AG04449 (cell line): ENCODE measurements at regions of chr2 and their contacts with region 1.

Region 1: GRCh38 chr2:23824777-23825212 is 102.1 kb downstream of the ATAD2B start:
- DNase-seq: no peak
- H3K4me3 ChIP-seq: no peak overlapping the region
- CTCF ChIP-seq: peak; percentile 44

Region 2: GRCh38 chr2:23803965-23804542 is 20.7 kb before region 1 on chr2:
- CTCF ChIA-PET with region 1: interaction called, 20 read pairs
- POLR2A ChIA-PET with region 1: no interaction called
- DNase-seq: no peak
- H3K4me3 ChIP-seq: no peak overlapping the region
- CTCF ChIP-seq: no peak

Region 3: GRCh38 chr2:24058564-24059271 is 233.9 kb after region 1 on chr2:
- CTCF ChIA-PET with region 1: interaction called, 36 read pairs
- POLR2A ChIA-PET with region 1: no interaction called
- DNase-seq: no peak
- H3K4me3 ChIP-seq: no peak overlapping the region
- CTCF ChIP-seq: no peak

Region 4: GRCh38 chr2:24164125-24164973 is 339.6 kb after region 1 on chr2:
- CTCF ChIA-PET with region 1: interaction called, 25 read pairs
- POLR2A ChIA-PET with region 1: no interaction called
- DNase-seq: no peak
- H3K4me3 ChIP-seq: no peak overlapping the region
- CTCF ChIP-seq: peak; percentile 75